T-cell (primary cell): ENCODE measurements at regions of chr5 and their contacts with region 1.

Region 1: GRCh38 chr5:65651144-65651543 is 26.3 kb downstream of the SHLD3 start:
- DNase-seq: no peak
- ATAC-seq: no peak
- H3K4me3 ChIP-seq: no peak overlapping the region
- H3K4me3 Mint-ChIP-seq: no peak overlapping the region
- H3K27ac ChIP-seq: no peak overlapping the region
- H3K27ac Mint-ChIP-seq: no peak overlapping the region
- H3K4me1 ChIP-seq: no peaks in the 10 kb centered on the region
- H3K4me1 Mint-ChIP-seq: no peaks in the 10 kb centered on the region
- H3K27me3 ChIP-seq: no peaks in the 10 kb centered on the region
- H3K27me3 Mint-ChIP-seq: no peaks in the 10 kb centered on the region

Region 2: GRCh38 chr5:65663804-65664521 is 12.8 kb after region 1 on chr5:
- CTCF ChIA-PET with region 1: interaction called in 1 of 2 experiments, 5 read pairs
- POLR2A ChIA-PET with region 1: interaction called, 4 to 10 read pairs
- DNase-seq: no peak
- ATAC-seq: no peak
- H3K4me3 ChIP-seq: no peak overlapping the region
- H3K4me3 Mint-ChIP-seq: no peak overlapping the region
- H3K27ac ChIP-seq: no peak overlapping the region
- H3K27ac Mint-ChIP-seq: peak overlapping the region; percentile 59 to 69
- H3K4me1 ChIP-seq: no peaks in the 10 kb centered on the region
- H3K4me1 Mint-ChIP-seq: peaks cover 4 to 7% (median 4%) of the 10 kb centered on the region in 3 donors
- H3K27me3 ChIP-seq: no peaks in the 10 kb centered on the region
- H3K27me3 Mint-ChIP-seq: no peaks in the 10 kb centered on the region

Region 3: DNA sequence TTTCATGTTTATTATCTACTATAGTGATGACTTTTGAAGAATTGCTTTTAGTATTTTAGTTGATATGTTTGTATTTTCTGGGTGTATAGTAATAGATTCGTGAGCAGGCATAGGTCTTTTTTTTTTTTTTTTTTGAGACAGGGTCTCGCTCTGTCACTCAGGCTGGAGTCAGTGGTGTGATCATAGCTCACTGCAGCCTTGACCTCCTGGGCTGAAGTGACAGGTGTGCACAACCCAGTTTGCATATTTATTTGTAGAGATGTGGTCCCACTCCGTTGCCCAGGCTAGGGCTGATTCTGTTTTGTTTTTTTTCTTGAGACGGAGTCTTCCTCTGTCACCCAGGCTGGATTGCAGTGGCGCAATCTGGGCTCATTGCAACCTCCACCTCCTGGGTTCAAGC is 287.1 kb after region 1 on chr5:
- CTCF ChIA-PET with region 1: no interaction called
- POLR2A ChIA-PET with region 1: no interaction called
- DNase-seq: no peak
- ATAC-seq: no peak
- H3K4me3 ChIP-seq: no peak overlapping the region
- H3K4me3 Mint-ChIP-seq: no peak overlapping the region
- H3K27ac ChIP-seq: no peak overlapping the region
- H3K27ac Mint-ChIP-seq: peak overlapping the region in 1 of 2 donors; percentile 5
- H3K4me1 ChIP-seq: peaks cover 10 to 16% of the 10 kb centered on the region in 2 experiments
- H3K4me1 Mint-ChIP-seq: peaks cover 58 to 66% (median 62%) of the 10 kb centered on the region in 3 donors
- H3K27me3 ChIP-seq: no peaks in the 10 kb centered on the region
- H3K27me3 Mint-ChIP-seq: no peaks in the 10 kb centered on the region